Activated T-helper 2 cell treated with anti-CD3 and anti-CD28 coated beads, Interferon-gamma antibody, Interleukin-2, Interleukin-4, amounts not matched to agents 10 μg/mL and 5 μg/mL and 100 μg/mL, durations not matched to agents 14 hours and 24 hours and 36 hours (primary cell): ENCODE measurements at regions of chr3 and their contacts with region 1.

Region 1: DNA sequence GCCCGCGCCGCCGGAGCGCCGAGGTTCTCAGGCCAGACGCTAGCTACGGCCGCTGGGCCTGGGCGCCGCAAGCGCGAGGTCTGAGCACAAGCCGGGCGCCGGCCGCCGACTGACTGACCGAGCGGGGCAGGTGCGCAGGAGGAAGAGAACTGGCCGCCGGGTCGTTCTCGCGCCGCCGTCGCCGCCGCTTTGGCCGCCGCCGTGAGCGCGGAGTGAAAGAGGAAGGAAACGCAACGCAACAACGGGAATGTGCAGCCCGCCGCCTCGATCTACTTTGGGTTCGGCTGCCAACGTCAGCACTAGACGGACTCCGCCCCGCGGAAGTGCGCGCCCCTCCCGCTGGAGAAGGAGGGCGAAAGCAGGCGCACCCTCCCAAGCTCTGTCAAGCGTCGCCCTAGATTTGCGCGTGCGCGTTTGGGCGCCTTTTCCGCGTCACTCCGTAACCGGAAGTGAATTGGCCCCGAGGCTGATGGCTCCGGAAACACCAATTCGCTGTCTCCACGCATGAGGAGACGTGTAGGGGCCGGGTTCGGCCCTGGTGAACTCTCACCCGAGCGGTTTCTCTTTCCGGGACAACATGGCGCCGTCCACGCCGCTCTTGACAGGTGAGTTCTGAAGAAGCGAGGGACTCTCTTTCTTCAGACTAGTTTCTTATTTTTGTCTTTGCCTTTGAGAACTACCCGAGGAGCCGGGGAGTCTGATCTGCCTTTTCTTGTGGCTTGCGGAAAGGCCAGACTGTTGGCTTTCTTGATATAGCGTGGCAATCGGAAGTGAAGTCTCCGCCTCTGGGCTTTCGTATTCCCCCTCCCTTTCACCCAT is at the starts of genes EIF2A and SERP1:
- DNase-seq: peak; percentile 100
- H3K4me3 Mint-ChIP-seq: peak within 1 kb of the TSS; percentile 97
- H3K27ac Mint-ChIP-seq: peak within 1 kb of the TSS; percentile 92
- H3K4me1 Mint-ChIP-seq: peaks cover 56% of the 10 kb centered on the region
- H3K27me3 Mint-ChIP-seq: no peaks in the 10 kb centered on the region
- total RNA-seq, gene EIF2A: 124 and 126 TPM in 2 replicates
- total RNA-seq, gene SERP1: 89.2 and 91.7 TPM in 2 replicates

Region 2: DNA sequence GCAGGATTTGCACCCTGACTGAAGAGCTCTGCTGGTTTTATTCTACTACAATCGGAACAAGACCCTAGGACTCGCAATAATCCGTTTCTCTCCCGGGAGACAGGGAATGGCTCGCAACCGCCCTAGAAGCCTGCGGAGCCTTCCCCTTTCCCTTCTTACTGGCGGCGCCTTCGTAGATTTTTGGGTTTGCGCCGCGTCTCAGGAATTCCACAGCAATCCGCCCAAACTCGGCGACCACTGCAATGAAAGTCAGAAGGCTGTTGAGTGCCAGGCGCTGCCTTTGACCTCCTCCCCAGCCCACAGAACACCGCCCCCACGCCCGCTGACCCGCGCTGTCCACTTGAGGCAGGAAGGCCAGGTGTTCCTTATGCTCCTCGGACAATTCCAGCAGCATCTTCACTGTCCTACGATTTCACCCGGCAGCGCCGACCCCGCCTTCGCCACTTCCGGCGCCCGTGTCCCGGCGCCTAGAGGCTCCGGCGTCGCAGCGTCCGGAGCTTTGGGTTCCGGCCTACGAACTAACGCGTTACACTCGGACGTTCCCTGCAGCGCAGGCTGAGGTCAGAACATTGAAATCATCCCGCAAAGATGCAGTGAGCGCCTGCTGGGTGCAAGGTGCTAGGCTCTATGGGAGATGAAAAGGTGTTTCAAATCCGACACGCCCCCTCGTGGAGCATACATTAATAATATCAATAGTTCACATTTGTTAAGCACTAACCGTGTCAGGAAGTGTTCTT is 794.2 kb before region 1 on chr3 and contains the start of gene COMMD2:
- intact Hi-C with region 1: loop called (anchors 2 kb)
- DNase-seq: peak; percentile 68
- H3K4me3 Mint-ChIP-seq: peak within 1 kb of the TSS; percentile 97
- H3K27ac Mint-ChIP-seq: peak within 1 kb of the TSS; percentile 87
- H3K4me1 Mint-ChIP-seq: peaks cover 16% of the 10 kb centered on the region
- H3K27me3 Mint-ChIP-seq: peaks cover 8% of the 10 kb centered on the region
- total RNA-seq, gene COMMD2: 40.3 and 43.3 TPM in 2 replicates

Region 3: GRCh38 chr3:150582620-150583019 is 36.2 kb after region 1 on chr3:
- intact Hi-C with region 1: loop called (anchors 1 kb)
- DNase-seq: no peak
- H3K4me3 Mint-ChIP-seq: no peak overlapping the region
- H3K27ac Mint-ChIP-seq: peak overlapping the region; percentile 42
- H3K4me1 Mint-ChIP-seq: peaks cover 21% of the 10 kb centered on the region
- H3K27me3 Mint-ChIP-seq: no peaks in the 10 kb centered on the region

Region 4: DNA sequence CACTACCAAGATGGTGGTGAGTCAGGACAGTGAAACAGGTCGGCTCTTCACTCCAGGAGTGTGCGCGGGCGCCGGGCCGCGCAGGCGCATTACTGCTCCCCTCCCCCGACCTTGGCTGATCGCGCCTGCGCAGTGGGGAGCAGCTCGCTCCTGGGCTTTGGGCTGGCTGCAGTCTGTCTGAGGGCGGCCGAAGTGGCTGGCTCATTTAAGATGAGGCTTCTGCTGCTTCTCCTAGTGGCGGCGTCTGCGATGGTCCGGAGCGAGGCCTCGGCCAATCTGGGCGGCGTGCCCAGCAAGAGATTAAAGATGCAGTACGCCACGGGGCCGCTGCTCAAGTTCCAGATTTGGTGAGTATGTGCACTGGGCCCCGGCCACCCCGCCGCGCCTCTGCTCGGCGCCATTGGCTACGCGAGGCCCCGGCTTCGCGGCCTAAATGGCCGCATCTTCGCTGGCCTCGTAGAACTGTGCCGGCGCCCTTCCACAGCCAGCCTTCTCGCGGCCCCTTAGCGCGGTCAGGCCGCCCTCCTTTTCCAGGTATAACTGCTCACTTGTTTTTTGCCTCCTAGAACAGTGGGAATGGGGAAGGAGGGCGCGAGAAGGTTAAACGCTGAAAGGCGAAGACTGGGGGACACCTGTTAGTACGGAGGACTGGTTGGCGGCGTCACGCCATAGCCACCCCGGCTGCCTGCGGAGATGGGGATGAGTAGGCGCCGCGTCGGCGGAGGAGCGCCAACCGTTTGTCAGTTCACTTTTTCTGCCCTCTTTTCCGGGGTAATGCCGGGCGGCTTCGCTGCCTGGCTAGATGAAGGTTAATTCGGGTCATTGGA is 56.9 kb after region 1 on chr3 and contains the start of gene SELENOT:
- intact Hi-C with region 1: loop called (anchors 1 kb)
- DNase-seq: peak; percentile 95
- H3K4me3 Mint-ChIP-seq: peak within 1 kb of the TSS; percentile 94
- H3K27ac Mint-ChIP-seq: peak within 1 kb of the TSS; percentile 97
- H3K4me1 Mint-ChIP-seq: peaks cover 56% of the 10 kb centered on the region
- H3K27me3 Mint-ChIP-seq: no peaks in the 10 kb centered on the region
- total RNA-seq, gene SELENOT: 119 and 121 TPM in 2 replicates

Region 5: GRCh38 chr3:150703299-150704134 is 157.1 kb after region 1 on chr3 and contains the start of gene ERICH6:
- intact Hi-C with region 1: loop called (anchors 1 kb)
- DNase-seq: peak; percentile 83
- H3K4me3 Mint-ChIP-seq: peak within 1 kb of the TSS; percentile 94
- H3K27ac Mint-ChIP-seq: peak within 1 kb of the TSS; percentile 97
- H3K4me1 Mint-ChIP-seq: peaks cover 25% of the 10 kb centered on the region
- H3K27me3 Mint-ChIP-seq: peaks cover 7% of the 10 kb centered on the region
- total RNA-seq, gene ERICH6: 0.21 and 0.39 TPM in 2 replicates

Region 6: DNA sequence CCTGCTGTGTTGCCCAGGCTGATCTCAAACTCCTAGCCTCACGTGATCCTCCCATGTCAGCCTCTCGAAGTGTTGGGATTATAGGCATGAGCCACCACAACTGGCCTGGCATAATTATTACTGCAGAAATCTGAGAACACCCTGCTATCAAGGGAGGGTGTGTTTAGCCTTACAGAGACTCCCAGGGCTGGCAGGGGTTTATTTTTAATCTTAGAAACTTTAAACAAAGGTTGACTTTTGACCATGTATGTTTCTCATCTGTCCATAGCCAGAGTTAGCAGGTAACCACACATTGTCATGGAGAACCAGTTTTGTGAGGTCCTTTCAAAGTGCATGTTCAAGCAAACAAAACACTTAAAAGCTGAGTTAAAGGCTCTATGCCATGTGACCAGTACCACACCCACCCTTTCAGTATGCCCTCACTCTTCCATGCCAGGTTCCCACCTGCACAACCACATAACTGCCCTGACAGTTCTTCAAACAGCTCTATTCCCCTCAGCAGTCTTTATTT is 205.4 kb after region 1 on chr3:
- intact Hi-C with region 1: loop called (anchors 1 kb)
- DNase-seq: no peak
- H3K4me3 Mint-ChIP-seq: no peak overlapping the region
- H3K27ac Mint-ChIP-seq: peak overlapping the region; percentile 79
- H3K4me1 Mint-ChIP-seq: peaks cover 75% of the 10 kb centered on the region
- H3K27me3 Mint-ChIP-seq: no peaks in the 10 kb centered on the region

Region 7: GRCh38 chr3:151047636-151048035 is 501.2 kb after region 1 on chr3:
- intact Hi-C with region 1: no loop called
- DNase-seq: no peak
- H3K4me3 Mint-ChIP-seq: no peak overlapping the region
- H3K27ac Mint-ChIP-seq: no peak overlapping the region
- H3K4me1 Mint-ChIP-seq: no peaks in the 10 kb centered on the region
- H3K27me3 Mint-ChIP-seq: peaks cover 27% of the 10 kb centered on the region